Vagina (tissue), 2 donors: ENCODE measurements at regions of chr2 and their contacts with region 1.

Region 1: DNA sequence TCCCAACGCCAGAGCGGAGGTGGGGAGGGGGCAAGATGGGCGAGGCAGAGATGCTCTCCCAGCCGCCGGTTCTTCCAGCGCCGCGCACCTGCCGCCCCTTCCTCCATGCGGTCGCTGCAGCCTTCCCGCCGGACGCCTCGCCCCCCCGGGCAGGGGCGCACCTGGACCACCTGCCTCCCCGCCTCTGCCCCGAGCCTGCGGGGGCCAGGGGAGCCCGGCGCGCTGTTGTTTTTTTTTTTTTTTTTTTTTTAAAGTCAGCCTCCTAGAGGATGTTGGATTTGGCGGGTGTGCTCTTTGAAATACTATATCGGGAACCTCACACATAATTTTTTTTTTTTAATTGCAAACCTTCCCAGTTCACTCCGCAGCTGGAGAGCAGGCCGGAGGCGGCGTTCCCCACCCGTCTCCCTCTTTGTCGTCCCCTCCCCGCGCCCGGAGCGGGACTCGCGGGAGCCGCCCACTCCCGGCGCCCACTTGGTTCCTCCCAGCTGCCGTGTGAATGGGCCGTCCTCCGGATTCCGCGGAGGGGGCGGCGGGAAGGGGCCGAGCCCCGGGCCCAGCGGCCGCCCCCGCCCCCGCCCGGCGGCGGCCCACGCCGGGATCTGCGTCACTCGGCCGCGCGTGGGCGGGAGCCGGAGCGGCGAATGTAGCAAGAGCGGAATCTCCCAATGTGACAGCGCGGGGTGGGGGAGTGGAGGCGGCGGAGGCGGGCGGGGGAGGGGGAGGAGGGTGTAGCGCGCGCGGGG is 421 bp upstream of the NAB1 start:
- DNase-seq: peak in 1 of 2 donors; percentile 91
- H3K4me3 ChIP-seq: peak overlapping the region; percentile 95 to 98
- H3K27ac ChIP-seq: peak overlapping the region; percentile 97
- H3K4me1 ChIP-seq: peaks cover 38% of the 10 kb centered on the region
- H3K27me3 ChIP-seq: no peaks in the 10 kb centered on the region
- CTCF ChIP-seq: no peak
- POLR2A ChIP-seq: peak in 1 of 2 donors; percentile 49

Region 2: GRCh38 chr2:190534310-190535120 is 113.9 kb before region 1 on chr2 and contains the start of gene NEMP2:
- intact Hi-C with region 1: loop called (anchors 10 kb)
- DNase-seq: no peak
- H3K4me3 ChIP-seq: peak within 1 kb of the TSS; percentile 64 to 75
- H3K27ac ChIP-seq: peak within 1 kb of the TSS; percentile 95
- H3K4me1 ChIP-seq: peaks cover 15% of the 10 kb centered on the region
- H3K27me3 ChIP-seq: no peaks in the 10 kb centered on the region
- CTCF ChIP-seq: no peak
- POLR2A ChIP-seq: peak in 1 of 2 donors; percentile 41
- total RNA-seq, gene NEMP2: 2.2 TPM